Endothelial cell of umbilical vein (primary cell): ENCODE measurements at regions of chr2 and their contacts with region 1.

Region 1: GRCh38 chr2:149597668-149598326 is 10.2 kb upstream of the MMADHC start:
- DNase-seq: peak; percentile 87
- H3K4me3 ChIP-seq: peak overlapping the region in 1 of 3 experiments; percentile 30
- H3K27ac ChIP-seq: peak overlapping the region; percentile 81
- H3K4me1 ChIP-seq: peaks cover 7% of the 10 kb centered on the region
- H3K27me3 ChIP-seq: no peaks in the 10 kb centered on the region
- CTCF ChIP-seq: peak; percentile 60 to 91
- POLR2A ChIP-seq: no peak

Region 2: DNA sequence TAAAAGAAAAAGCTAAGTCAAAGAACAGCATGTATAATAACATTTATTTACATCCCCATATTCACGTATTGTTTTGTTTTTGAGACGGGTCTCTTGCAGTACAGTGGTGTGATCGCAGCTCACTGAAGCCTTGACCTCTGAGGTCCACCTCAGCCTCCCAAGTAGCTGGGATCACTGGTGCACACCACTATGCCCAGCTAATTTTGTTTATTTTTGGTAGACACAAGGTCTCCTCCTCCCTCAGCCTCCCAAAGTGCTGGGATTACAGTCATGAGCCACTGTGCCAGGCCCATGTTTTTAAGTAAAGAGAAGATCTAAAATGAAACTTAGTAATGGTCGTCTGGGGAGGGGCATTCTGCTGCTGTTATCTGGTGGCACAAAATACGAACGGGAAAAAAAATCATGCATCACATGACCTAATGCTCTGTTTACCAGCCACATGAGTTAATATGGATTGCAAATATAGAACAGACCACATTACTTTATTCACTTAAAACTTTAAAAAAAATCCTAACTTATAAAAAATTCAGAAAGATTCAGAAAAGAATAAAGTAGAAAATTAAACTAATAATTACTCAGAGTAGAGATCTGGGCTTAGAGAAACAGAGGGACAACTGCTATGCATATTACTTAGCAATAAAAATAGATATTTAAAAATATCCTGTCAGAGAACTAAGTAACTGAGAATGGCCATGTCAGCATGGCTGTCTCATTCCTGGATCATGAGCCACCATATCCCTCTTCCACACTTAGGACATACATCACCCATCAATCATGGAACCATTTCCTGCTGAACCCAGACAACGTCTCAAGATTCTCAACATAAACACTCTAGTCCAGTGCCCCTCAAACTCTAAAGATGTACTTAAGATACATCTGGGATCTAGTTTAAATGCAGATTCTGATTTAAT is 17.6 kb before region 1 on chr2:
- CTCF ChIA-PET with region 1: no interaction called
- POLR2A ChIA-PET with region 1: no interaction called
- dilution Hi-C with region 1: no loop called
- intact Hi-C with region 1: no loop called
- DNase-seq: no peak
- H3K4me3 ChIP-seq: no peak overlapping the region
- H3K27ac ChIP-seq: no peak overlapping the region
- H3K4me1 ChIP-seq: peaks cover 14% of the 10 kb centered on the region
- H3K27me3 ChIP-seq: no peaks in the 10 kb centered on the region
- CTCF ChIP-seq: no peak
- POLR2A ChIP-seq: no peak

Region 3: DNA sequence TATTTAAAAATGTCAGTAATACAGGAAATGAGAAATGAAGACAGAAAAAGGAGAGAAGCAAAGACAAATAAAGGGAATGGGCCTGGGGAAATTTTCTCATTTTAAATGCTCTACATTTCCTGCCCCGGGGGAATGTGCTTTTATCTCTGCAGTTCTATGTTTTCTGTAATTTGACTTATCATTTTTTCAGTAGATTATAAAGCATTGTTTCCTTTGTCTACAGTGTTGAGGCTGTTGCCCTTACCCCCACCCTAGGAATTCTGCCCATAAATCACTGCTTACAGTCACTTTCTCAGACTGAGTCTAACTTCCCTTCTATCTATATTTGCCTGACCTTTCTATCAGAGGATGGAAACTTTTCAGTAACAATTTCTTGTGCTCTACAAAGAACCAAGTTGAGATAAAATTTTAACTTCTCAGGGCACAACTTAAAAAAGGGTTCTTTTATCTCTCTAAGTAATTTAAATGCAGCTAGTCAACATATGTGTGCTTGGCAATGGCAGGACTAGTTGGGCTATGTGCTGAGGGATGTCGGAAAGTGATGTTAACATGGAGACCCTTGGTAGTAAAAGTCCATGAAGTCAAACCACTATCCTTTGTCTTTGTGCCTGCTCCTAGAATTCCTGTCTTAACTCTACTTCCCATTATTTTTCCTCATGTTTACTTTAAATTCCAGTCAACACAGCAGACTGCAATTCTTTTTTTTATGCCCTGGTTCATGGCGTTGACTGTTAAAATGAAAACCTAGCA is 136.3 kb after region 1 on chr2:
- CTCF ChIA-PET with region 1: interaction called, 3 read pairs
- POLR2A ChIA-PET with region 1: no interaction called
- dilution Hi-C with region 1: no loop called
- intact Hi-C with region 1: loop called (anchors 5 kb)
- DNase-seq: peak; percentile 94
- H3K4me3 ChIP-seq: no peak overlapping the region
- H3K27ac ChIP-seq: peak overlapping the region; percentile 97
- H3K4me1 ChIP-seq: peaks cover 39% of the 10 kb centered on the region
- H3K27me3 ChIP-seq: no peaks in the 10 kb centered on the region
- CTCF ChIP-seq: no peak
- POLR2A ChIP-seq: no peak

Region 4: DNA sequence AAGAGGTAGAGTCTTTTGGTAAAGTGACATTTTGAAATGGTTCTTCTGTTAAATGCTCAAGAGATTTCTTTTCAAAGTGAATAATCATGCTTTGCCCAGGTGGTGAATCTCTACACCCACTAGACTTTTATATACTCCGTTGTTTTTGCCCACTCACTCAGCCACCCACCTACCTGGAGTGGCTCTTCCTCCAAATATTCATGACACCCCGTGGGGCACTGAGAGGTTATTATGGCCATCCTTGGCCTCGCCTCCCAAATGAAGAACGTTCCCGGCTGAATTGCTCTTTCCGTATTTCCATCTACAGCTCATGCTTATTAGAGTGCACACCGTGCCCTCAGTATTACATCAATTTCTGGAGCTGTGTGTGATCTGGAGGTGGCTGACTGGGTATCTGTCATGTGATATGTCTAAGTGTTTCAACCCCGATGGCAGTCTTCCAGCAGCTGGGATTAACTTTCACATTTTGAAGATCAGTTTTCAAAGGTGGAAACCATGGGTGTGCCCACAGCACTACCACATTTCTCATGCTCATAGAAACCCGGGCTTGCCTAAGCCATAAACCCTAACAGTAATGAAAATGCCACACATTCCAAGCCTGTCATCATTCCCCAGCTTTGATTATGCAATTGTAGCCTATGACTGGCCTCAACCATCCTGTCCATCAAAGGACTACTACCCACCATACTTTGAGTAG is 396.4 kb after region 1 on chr2:
- CTCF ChIA-PET with region 1: no interaction called
- POLR2A ChIA-PET with region 1: no interaction called
- dilution Hi-C with region 1: no loop called
- intact Hi-C with region 1: loop called (anchors 10 kb)
- DNase-seq: no peak
- H3K4me3 ChIP-seq: no peak overlapping the region
- H3K27ac ChIP-seq: no peak overlapping the region
- H3K4me1 ChIP-seq: peaks cover 14% of the 10 kb centered on the region
- H3K27me3 ChIP-seq: no peaks in the 10 kb centered on the region
- CTCF ChIP-seq: no peak
- POLR2A ChIP-seq: no peak

Region 5: DNA sequence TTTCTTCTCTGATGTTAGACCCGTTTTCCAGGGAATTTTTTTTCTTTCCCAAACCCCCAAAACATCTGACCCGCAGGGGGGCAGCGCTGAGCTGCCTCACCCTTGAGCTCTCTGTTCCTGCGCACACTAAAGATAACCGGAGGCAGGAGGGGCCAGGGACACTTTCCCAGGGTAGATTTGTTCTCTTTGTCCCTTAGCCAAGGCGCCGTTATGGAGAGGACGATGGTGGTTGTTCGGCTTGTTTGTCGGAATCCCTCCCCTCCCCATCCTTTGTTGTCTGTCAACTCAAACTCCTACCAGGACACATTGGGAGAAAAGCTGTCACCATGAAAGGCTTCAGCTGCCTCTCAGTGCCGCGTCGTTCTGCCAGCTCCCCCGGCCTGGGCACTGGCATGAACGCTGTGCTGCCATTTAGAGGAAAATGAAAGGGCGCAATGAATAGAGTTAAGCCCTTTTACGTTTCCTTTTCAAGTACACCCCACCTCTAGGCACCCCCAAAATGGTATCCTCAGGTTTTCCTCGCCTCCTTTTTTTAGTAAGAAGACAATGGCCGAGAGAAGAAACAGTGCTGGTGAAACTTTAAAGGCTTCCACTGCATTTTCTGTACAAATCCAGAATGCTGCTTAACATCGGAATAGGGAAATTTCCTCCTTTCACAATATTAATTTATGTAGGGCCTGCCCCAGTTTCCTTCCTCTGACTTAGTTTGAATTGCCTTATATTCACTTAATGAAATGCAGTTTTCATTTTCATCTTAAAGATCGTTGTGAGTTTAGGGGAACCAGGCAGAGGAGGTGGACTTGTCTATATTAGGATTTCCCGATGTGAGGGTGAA is 827.5 kb after region 1 on chr2:
- CTCF ChIA-PET with region 1: no interaction called
- POLR2A ChIA-PET with region 1: no interaction called
- dilution Hi-C with region 1: no loop called
- intact Hi-C with region 1: loop called (anchors 1 kb)
- DNase-seq: peak; percentile 76
- H3K4me3 ChIP-seq: peak overlapping the region in 2 of 3 experiments; percentile 30 to 55
- H3K27ac ChIP-seq: peak overlapping the region; percentile 77
- H3K4me1 ChIP-seq: peaks cover 17% of the 10 kb centered on the region
- H3K27me3 ChIP-seq: no peaks in the 10 kb centered on the region
- CTCF ChIP-seq: peak; percentile 47 to 49
- POLR2A ChIP-seq: peak; percentile 33

Region 6: DNA sequence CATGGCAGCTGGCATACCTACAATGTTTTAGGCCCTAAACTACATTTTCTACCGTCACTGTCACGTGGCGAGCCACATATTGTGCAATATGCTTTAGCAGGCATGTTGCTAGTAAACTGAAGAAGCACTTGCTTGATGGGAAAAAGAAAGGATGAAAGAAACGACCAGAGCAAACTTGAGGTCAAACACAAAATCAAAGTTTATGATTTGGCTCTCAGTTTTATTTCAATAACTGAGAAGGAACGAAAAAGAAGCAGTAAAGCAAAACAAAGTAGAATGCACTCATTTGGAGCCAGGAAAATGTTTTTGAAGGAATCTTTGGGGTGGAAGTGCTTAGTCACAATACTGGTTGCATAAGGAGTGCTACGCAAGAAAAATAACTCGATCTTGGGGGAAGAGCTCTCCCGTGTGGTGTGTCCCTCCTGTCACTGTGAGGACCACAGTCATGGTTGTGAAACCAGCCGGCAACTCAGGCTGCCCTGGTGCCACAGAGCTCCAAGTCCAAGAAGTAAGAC is 1314.0 kb after region 1 on chr2:
- CTCF ChIA-PET with region 1: no interaction called
- POLR2A ChIA-PET with region 1: no interaction called
- dilution Hi-C with region 1: no loop called
- intact Hi-C with region 1: loop called (anchors 2 kb)
- DNase-seq: peak; percentile 77
- H3K4me3 ChIP-seq: no peak overlapping the region
- H3K27ac ChIP-seq: no peak overlapping the region
- H3K4me1 ChIP-seq: peaks cover 3% of the 10 kb centered on the region
- H3K27me3 ChIP-seq: peaks cover 0 to 2% of the 10 kb centered on the region in 2 experiments
- CTCF ChIP-seq: peak in 1 of 2 donors; percentile 27
- POLR2A ChIP-seq: no peak

Region 7: GRCh38 chr2:151280271-151280670 is 1682.5 kb after region 1 on chr2:
- CTCF ChIA-PET with region 1: no interaction called
- POLR2A ChIA-PET with region 1: no interaction called
- dilution Hi-C with region 1: no loop called
- intact Hi-C with region 1: no loop called
- DNase-seq: no peak
- H3K4me3 ChIP-seq: no peak overlapping the region
- H3K27ac ChIP-seq: no peak overlapping the region
- H3K4me1 ChIP-seq: no peaks in the 10 kb centered on the region
- H3K27me3 ChIP-seq: no peaks in the 10 kb centered on the region
- CTCF ChIP-seq: no peak
- POLR2A ChIP-seq: no peak